ENCODE measurements at regions of chr2 and their contacts with region 1.

Region 1: GRCh38 chr2:101704046-101704466 is 6.5 kb downstream of the MAP4K4 start:
- DNase-seq: no peak
- ATAC-seq: peak; percentile 6
- H3K4me3 Mint-ChIP-seq: peak overlapping the region; percentile 48
- H3K27ac Mint-ChIP-seq: peak overlapping the region; percentile 80
- H3K4me1 Mint-ChIP-seq: peaks cover 70% of the 10 kb centered on the region
- H3K27me3 Mint-ChIP-seq: no peaks in the 10 kb centered on the region
- CTCF ChIP-seq: no peak

Region 2: GRCh38 chr2:101741775-101742520 is 37.9 kb after region 1 on chr2:
- CTCF ChIA-PET with region 1: interaction called, 3 read pairs
- POLR2A ChIA-PET with region 1: interaction called, 4 read pairs
- intact Hi-C with region 1: loop called (anchors 5 kb)
- DNase-seq: no peak
- ATAC-seq: no peak
- H3K4me3 Mint-ChIP-seq: no peak overlapping the region
- H3K27ac Mint-ChIP-seq: peak overlapping the region; percentile 62
- H3K4me1 Mint-ChIP-seq: peaks cover 78% of the 10 kb centered on the region
- H3K27me3 Mint-ChIP-seq: no peaks in the 10 kb centered on the region
- CTCF ChIP-seq: no peak

Region 3: GRCh38 chr2:101759162-101759561 is 55.1 kb after region 1 on chr2:
- CTCF ChIA-PET with region 1: interaction called, 3 read pairs
- POLR2A ChIA-PET with region 1: no interaction called
- intact Hi-C with region 1: loop called (anchors 5 kb)
- DNase-seq: no peak
- ATAC-seq: no peak
- H3K4me3 Mint-ChIP-seq: no peak overlapping the region
- H3K27ac Mint-ChIP-seq: no peak overlapping the region
- H3K4me1 Mint-ChIP-seq: peaks cover 63% of the 10 kb centered on the region
- H3K27me3 Mint-ChIP-seq: no peaks in the 10 kb centered on the region
- CTCF ChIP-seq: no peak

Measured in activated CD8-positive, alpha-beta T cell treated with anti-CD3 and anti-CD28 coated beads for 36 hours (primary cell).